ENCODE measurements at regions of chr15 and their contacts with region 1.

Region 1: DNA sequence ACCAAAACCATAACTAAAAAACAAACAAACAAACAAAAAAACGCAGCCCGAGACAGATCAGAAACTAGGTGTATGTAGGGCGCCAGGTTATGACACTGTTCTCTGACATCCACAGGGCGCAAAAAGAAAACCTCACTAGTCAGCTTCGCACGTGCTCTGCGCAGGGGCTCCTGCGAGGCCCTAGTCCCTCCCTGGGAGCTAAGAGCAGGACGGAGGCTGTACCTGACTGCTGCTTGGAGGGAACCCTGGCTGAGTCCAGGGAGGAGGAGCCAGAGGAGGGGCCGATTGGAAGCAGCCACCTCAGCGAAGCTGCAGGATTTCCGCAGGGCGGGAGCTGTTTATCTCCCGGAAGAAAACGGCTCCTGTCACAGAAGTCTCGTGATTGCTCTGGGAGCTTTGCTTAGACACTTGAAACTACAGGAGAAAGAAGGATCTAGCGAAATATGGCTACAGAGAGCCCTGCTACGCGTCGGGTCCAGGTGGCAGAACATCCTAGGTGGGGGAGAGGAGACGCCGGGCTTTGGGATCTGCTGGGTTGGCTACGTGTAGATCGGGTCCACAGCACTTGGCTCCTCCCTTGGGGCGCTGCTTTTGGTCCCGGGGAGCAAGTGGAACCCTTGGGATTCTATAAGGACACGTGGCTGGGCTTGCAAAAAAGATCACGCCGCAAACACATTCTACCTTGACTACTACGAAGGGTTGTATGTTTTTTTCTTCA is at the start of gene GALK2:
- H3K4me3 ChIP-seq: peak within 1 kb of the TSS; percentile 65
- H3K27ac ChIP-seq: peak within 1 kb of the TSS; percentile 40
- H3K4me1 ChIP-seq: no peaks in the 10 kb centered on the region
- CTCF ChIP-seq: no peak

Region 2: GRCh38 chr15:49101536-49101935 is 68.5 kb before region 1 on chr15:
- CTCF ChIA-PET with region 1: no interaction called
- POLR2A ChIA-PET with region 1: no interaction called
- H3K4me3 ChIP-seq: no peak overlapping the region
- H3K27ac ChIP-seq: no peak overlapping the region
- H3K4me1 ChIP-seq: no peaks in the 10 kb centered on the region
- CTCF ChIP-seq: no peak

Region 3: GRCh38 chr15:49155110-49155833 is 14.8 kb before region 1 on chr15 and contains the start of gene COPS2:
- CTCF ChIA-PET with region 1: no interaction called
- POLR2A ChIA-PET with region 1: interaction called, 27 read pairs
- H3K4me3 ChIP-seq: peak within 1 kb of the TSS; percentile 96
- H3K27ac ChIP-seq: peak within 1 kb of the TSS; percentile 47; the same call in 1 of the 2 replicates
- H3K4me1 ChIP-seq: peaks cover 4% of the 10 kb centered on the region; the same call in 1 of the 2 replicates
- CTCF ChIP-seq: 0 out of 2 replicates have a peak, but pooled peaks have one; percentile 6

Region 4: GRCh38 chr15:49190586-49190985 is 20.5 kb after region 1 on chr15:
- CTCF ChIA-PET with region 1: no interaction called
- POLR2A ChIA-PET with region 1: no interaction called
- H3K4me3 ChIP-seq: no peak overlapping the region
- H3K27ac ChIP-seq: no peak overlapping the region
- H3K4me1 ChIP-seq: 0 out of 2 replicates have a peak, but pooled peaks cover under 1% of the 10 kb centered on the region
- CTCF ChIP-seq: no peak

Region 5: DNA sequence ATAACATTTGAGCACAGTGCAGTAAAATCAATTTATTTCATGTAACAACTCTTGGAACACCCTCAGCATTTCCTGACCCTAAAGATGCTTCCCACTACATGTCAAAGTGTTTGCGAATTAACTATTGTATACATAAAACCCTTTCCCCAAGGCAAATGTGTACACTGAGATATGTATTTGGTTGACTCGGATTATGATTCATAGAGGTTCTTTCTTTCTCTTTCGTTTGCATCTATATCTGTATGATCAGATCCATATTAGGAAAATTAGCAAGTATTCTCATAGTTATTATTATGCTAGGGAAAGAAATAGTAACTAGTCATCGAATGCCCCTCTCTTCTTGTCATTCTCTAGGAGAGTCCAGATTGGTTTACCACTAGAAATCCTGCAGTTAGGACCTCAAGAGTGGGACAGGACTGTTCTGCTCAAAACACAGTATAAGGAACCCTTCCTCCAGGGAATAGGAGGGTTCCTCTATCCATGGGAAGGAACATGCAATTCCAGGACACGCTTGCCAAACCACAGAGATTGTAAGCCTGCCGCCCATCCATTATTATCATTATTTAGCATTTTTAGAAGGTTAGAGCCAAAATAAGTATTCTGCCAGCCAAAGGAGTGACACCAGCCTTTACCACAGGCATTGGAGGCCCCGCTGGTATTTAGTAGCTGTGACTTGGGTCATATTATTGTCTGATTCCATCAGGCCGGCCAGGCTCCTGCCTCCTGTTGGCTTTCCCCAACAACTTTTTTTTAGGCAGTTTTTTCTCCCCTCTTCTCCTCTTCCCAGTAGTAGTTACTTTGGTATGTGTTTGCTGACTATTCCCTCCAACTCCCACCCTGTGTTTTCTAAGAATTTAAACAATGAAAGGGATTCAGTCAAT is 100.7 kb after region 1 on chr15:
- CTCF ChIA-PET with region 1: no interaction called
- POLR2A ChIA-PET with region 1: no interaction called
- H3K4me3 ChIP-seq: no peak overlapping the region
- H3K27ac ChIP-seq: no peak overlapping the region
- H3K4me1 ChIP-seq: no peaks in the 10 kb centered on the region
- CTCF ChIP-seq: no peak

Region 6: DNA sequence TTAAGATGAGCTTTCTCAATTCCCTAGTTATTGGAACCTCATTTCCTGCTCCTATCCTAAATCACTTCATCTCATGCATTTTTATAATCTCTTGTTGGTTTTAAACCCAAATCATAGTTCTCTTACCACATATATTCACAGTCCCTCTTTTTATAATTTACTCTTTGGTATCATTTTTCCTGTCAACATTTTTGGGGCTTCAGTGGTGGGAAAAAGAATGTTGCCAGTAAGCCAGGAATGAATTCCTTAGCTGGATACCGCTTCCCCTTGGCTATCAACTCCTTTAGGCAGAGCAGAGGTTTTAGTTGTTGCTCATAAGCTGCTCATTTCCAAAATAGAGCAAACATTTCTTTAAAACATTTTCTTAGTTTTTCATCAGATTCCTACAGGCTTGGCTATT is 112.3 kb after region 1 on chr15:
- CTCF ChIA-PET with region 1: no interaction called
- POLR2A ChIA-PET with region 1: no interaction called
- H3K4me3 ChIP-seq: no peak overlapping the region
- H3K27ac ChIP-seq: no peak overlapping the region
- H3K4me1 ChIP-seq: no peaks in the 10 kb centered on the region
- CTCF ChIP-seq: no peak

Measured in HEK293 (cell line).